ENCODE measurements at regions of chr6 and their contacts with region 1.

Region 1: GRCh38 chr6:150224820-150225219 is 82.0 kb downstream of the PPP1R14C start:
- DNase-seq: no peak
- H3K4me3 ChIP-seq: no peak overlapping the region
- CTCF ChIP-seq: no peak

Region 2: DNA sequence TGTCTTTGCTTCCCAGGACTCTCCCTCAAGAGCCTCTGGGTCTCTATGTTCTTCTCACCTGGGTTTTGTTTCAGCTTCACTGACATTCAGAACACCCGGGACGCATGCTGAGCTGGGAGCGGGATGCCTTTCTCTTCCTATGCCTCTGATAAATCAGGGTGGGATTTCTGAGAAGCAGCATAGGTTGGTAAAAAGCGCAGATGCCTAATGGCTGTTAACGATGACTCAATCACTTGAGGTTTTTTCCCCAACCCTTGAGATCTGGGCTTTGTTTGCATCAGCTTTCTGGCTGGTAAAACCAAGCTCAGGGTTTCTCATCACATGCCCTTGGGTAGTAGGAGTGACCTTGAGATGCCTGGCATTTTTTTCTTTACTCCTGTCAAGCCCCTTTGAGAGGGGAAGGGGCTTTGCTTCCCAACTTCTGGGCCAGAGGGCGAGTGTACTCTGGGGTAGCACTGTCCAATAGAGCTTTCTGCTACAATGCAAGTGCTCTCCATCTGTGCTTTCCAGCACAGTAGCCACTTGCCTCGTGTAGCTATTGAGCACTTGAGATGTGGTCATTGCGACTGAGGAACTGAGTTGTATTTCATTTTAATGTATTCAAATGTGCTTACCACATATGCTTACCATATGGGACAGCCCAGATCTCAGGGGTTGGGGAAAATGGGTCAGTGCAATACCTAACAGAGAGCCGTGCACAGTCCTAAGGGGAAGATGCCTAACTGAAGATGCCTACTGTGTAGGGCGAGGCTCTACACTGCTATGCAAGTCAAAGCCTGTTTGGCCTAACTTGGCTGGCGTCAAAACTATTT is 12.9 kb before region 1 on chr6:
- CTCF ChIA-PET with region 1: interaction called, 10 read pairs
- POLR2A ChIA-PET with region 1: no interaction called
- DNase-seq: no peak
- H3K4me3 ChIP-seq: no peak overlapping the region
- CTCF ChIP-seq: no peak